Activated CD4-positive, alpha-beta T cell treated with anti-CD3 and anti-CD28 coated beads for 36 hours (primary cell): ENCODE measurements at regions of chr1 and their contacts with region 1.

Region 1: GRCh38 chr1:206912445-206913095 is 9.2 kb downstream of the FCMR start:
- DNase-seq: peak; percentile 76
- ATAC-seq: peak; percentile 39
- H3K4me3 Mint-ChIP-seq: no peak overlapping the region
- H3K27ac Mint-ChIP-seq: no peak overlapping the region
- H3K4me1 Mint-ChIP-seq: peaks cover 88% of the 10 kb centered on the region
- H3K27me3 Mint-ChIP-seq: no peaks in the 10 kb centered on the region

Region 2: DNA sequence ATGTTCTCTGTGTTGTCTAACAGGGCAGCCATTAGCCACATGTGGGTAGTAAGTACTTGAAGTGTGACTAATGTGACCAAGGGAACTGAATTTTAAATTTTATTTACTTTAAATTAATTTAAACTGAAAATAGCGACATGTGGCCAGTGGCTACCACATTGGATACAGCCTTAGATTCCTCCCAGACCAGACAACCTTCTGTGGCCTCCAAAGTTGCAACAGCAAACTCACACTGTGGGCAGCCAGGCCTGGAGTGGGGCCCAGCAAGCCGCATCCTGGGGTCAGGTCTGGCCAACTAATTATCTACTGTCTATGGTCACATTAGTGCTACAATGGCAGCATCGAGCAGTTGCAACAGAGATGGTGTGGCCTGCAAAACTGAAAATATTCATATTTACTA is 312.0 kb before region 1 on chr1:
- CTCF ChIA-PET with region 1: no interaction called
- POLR2A ChIA-PET with region 1: no interaction called
- intact Hi-C with region 1: no loop called
- DNase-seq: no peak
- ATAC-seq: no peak
- H3K4me3 Mint-ChIP-seq: no peak overlapping the region
- H3K27ac Mint-ChIP-seq: no peak overlapping the region
- H3K4me1 Mint-ChIP-seq: no peaks in the 10 kb centered on the region
- H3K27me3 Mint-ChIP-seq: no peaks in the 10 kb centered on the region

Region 3: DNA sequence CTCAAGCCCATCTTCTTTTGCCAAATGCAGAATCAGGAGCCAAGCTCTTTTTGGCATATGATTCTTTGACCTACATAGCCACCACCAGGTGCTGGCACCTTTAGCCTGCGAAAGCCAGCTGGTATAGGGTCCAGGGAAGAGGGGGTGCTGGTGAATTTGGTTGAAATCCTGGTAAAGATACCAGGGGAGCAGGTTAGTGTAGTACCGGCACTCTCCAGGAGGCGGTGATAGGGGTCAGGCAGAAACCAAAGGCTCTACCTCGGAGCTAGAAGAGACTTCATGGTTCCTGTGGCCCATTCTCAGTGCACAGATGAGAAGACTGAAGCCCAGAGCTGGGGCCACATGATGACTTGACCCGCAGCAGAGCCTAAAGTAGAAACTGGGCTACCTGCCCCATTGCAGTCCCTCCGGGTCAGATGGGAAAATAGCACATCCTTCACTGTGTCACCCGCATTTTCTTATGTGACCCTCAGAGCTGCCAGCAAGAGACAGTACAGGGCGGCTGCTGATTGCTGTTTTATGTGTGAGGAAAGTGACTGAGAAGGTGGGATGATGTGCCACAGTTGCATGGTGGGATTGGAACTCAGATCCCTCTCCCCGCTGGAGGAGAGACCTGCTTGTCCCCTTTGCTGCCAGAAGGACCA is 177.9 kb before region 1 on chr1:
- CTCF ChIA-PET with region 1: interaction called, 98 read pairs
- POLR2A ChIA-PET with region 1: interaction called, 3 read pairs
- intact Hi-C with region 1: loop called (anchors 1 kb)
- DNase-seq: peak; percentile 89
- ATAC-seq: peak; percentile 52
- H3K4me3 Mint-ChIP-seq: no peak overlapping the region
- H3K27ac Mint-ChIP-seq: no peak overlapping the region
- H3K4me1 Mint-ChIP-seq: peaks cover 55% of the 10 kb centered on the region
- H3K27me3 Mint-ChIP-seq: no peaks in the 10 kb centered on the region

Region 4: GRCh38 chr1:206814716-206815341 is 97.7 kb before region 1 on chr1:
- CTCF ChIA-PET with region 1: interaction called, 90 read pairs
- POLR2A ChIA-PET with region 1: interaction called, 7 read pairs
- intact Hi-C with region 1: loop called (anchors 2 kb)
- DNase-seq: no peak
- ATAC-seq: no peak
- H3K4me3 Mint-ChIP-seq: no peak overlapping the region
- H3K27ac Mint-ChIP-seq: no peak overlapping the region
- H3K4me1 Mint-ChIP-seq: peaks cover 26% of the 10 kb centered on the region
- H3K27me3 Mint-ChIP-seq: peaks cover 2% of the 10 kb centered on the region

Region 5: DNA sequence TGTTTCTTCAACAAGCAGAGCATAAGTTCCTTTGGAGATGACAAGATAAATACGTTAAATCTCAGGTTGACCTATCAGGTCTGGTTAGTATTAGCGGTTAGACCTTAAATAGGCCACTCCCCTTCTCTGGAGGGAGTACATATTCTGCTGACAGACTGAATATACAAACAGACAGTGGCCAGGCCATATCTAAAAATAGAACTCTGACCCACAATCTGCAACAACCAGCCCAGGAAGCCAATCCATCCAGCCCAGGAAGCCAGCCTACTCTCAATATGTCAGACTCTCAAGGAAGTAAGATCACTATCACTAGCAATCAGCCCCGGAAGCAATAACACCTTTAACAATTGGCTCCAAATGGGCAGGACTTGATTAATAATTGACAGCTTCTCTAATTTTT is 40.4 kb before region 1 on chr1:
- CTCF ChIA-PET with region 1: interaction called, 306 read pairs
- POLR2A ChIA-PET with region 1: interaction called, 3 read pairs
- intact Hi-C with region 1: no loop called
- DNase-seq: no peak
- ATAC-seq: no peak
- H3K4me3 Mint-ChIP-seq: no peak overlapping the region
- H3K27ac Mint-ChIP-seq: no peak overlapping the region
- H3K4me1 Mint-ChIP-seq: no peaks in the 10 kb centered on the region
- H3K27me3 Mint-ChIP-seq: no peaks in the 10 kb centered on the region

Region 6: DNA sequence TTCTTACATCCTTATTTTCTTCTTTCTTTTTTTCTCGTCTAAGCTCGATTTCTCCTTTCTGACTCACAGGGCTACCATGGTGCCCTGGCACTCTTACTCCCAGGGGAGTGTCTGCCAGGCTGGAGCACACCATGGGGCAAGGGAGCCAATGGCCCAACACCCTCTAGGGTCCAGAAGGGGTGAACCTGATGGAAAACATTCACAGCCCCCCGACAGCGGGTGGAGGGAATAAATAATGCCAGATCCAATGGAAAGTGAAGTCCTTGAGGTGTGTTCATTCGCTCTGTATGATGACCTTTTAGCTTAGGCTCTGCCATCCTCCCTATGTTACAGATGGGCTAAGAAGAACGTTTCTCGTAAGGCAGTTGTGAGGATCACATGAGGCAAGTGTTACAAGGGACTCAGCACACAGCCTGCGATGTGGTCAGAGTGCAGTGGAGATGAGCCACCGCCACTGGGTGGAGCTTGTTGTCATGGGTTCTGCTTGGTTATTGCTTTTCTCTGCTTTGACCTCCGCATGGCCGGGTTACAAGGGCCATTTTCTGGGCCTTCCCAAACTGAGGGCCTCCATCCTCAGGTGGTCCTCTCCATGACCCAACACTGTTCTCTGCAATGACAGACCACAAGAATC is 12.7 kb after region 1 on chr1:
- CTCF ChIA-PET with region 1: interaction called, 200 read pairs
- POLR2A ChIA-PET with region 1: interaction called, 4 read pairs
- intact Hi-C with region 1: no loop called
- DNase-seq: peak; percentile 83
- ATAC-seq: peak; percentile 58
- H3K4me3 Mint-ChIP-seq: no peak overlapping the region
- H3K27ac Mint-ChIP-seq: no peak overlapping the region
- H3K4me1 Mint-ChIP-seq: peaks cover 28% of the 10 kb centered on the region
- H3K27me3 Mint-ChIP-seq: no peaks in the 10 kb centered on the region